Heart left ventricle (tissue), 16 donors: ENCODE measurements at regions of chr1 and their contacts with region 1.

Region 1: DNA sequence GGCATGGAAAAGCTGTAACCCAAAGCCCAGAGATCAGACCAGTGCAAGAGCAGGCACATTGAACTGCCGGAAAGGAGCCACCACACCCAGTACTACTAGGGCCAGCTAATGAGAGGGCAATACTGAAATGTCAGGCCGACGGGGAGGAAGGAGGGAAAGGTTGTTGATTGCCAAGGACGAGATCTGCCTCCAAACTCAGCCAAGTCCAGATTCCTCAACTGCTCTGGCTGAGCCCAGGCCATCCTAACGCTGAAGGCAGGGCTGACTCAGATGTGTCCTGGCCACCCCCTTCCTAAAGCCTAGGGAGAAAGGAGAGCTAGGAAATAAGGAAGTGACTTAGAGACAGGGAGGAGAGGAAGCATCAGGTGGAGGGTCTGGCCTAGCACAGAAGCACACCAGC is 42.1 kb upstream of the IPO9 start:
- DNase-seq: peak; percentile 48 to 84 (median 68)
- ATAC-seq: peak; percentile 69 to 89 (median 74)
- H3K4me3 ChIP-seq: no peak overlapping the region
- H3K27ac ChIP-seq: peak overlapping the region; percentile 34 to 79 (median 62)
- H3K4me1 ChIP-seq: peaks cover 14 to 77% (median 49%) of the 10 kb centered on the region in 12 donors
- H3K27me3 ChIP-seq: no peaks in the 10 kb centered on the region
- CTCF ChIP-seq: no peak
- POLR2A ChIP-seq: no peak

Region 2: DNA sequence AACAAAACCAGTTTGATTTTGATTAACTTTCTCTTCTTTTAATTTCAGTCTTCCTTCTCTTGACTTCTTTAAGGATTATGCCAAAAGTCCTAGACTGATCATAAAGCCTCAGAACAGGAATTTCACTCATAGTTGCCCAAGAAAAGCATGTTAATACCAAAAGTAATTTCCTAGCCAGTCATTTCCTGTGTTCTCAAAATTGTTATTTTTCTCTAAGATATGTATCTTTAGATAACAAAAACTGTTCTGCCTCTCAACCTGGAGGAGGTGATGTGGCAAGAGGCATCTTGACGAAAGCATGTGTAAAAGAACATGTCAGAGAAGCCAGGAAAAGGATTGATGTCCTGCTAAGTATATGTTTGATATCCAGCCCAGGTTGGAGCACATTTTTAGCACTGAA is 35.9 kb before region 1 on chr1:
- intact Hi-C with region 1: loop called in 2 of 10 experiments (anchors 5 kb)
- DNase-seq: no peak
- ATAC-seq: no peak
- H3K4me3 ChIP-seq: no peak overlapping the region
- H3K27ac ChIP-seq: peak overlapping the region in 11 of 12 donors; percentile 1 to 73 (median 34)
- H3K4me1 ChIP-seq: peaks cover 13 to 100% (median 88%) of the 10 kb centered on the region in 12 donors
- H3K27me3 ChIP-seq: no peaks in the 10 kb centered on the region
- CTCF ChIP-seq: no peak
- POLR2A ChIP-seq: no peak

Region 3: DNA sequence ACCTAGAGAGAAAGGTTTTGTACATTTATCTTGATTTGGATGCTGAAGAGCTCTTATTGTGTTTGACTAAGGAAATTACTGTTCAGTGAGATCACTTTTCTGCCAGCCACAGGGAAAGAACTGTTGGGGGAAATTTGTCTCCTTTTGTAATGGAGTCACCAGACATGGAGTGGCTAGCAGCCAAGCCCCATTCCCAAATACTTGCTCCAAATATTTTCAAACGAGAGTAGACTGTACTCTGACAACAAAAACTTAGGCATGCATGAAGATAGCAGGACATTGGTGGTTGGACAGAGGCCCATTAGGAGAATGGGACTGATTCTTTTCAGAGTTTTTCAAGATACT is 63.2 kb after region 1 on chr1:
- intact Hi-C with region 1: no loop called
- DNase-seq: peak in 4 of 5 donors; percentile 41 to 48 (median 44)
- ATAC-seq: peak; percentile 50 to 78 (median 58)
- H3K4me3 ChIP-seq: no peak overlapping the region
- H3K27ac ChIP-seq: peak overlapping the region in 11 of 12 donors; percentile 16 to 65 (median 56)
- H3K4me1 ChIP-seq: peaks cover 0 to 38% (median 22%) of the 10 kb centered on the region in 12 donors
- H3K27me3 ChIP-seq: no peaks in the 10 kb centered on the region
- CTCF ChIP-seq: no peak
- POLR2A ChIP-seq: no peak